Calu3 (cell line): ENCODE measurements at regions of chr16 and their contacts with region 1.

Region 1: GRCh38 chr16:4957720-4958509 is at the start of gene SEC14L5:
- DNase-seq: peak; percentile 99
- H3K4me3 Mint-ChIP-seq: peak within 1 kb of the TSS; percentile 66
- H3K27ac Mint-ChIP-seq: peak within 1 kb of the TSS; percentile 8
- H3K4me1 Mint-ChIP-seq: peaks cover 17% of the 10 kb centered on the region
- H3K27me3 Mint-ChIP-seq: peaks cover 39% of the 10 kb centered on the region
- CTCF ChIP-seq: no peak
- total RNA-seq, gene SEC14L5: 0.52 and 0.54 TPM in 2 replicates

Region 2: GRCh38 chr16:4734063-4734729 is 223.7 kb before region 1 on chr16 and contains the starts of genes ANKS3 and DNAAF8:
- CTCF ChIA-PET with region 1: interaction called, 4 read pairs
- intact Hi-C with region 1: loop called (anchors 10 kb)
- DNase-seq: peak; percentile 98
- H3K4me3 Mint-ChIP-seq: peak within 1 kb of the TSS; percentile 99
- H3K27ac Mint-ChIP-seq: peak within 1 kb of the TSS; percentile 97
- H3K4me1 Mint-ChIP-seq: peaks cover 17% of the 10 kb centered on the region
- H3K27me3 Mint-ChIP-seq: peaks cover 14% of the 10 kb centered on the region
- CTCF ChIP-seq: no peak
- total RNA-seq, gene ANKS3: 44.7 and 46.9 TPM in 2 replicates
- total RNA-seq, gene DNAAF8: 0.27 and 1.8 TPM in 2 replicates

Region 3: DNA sequence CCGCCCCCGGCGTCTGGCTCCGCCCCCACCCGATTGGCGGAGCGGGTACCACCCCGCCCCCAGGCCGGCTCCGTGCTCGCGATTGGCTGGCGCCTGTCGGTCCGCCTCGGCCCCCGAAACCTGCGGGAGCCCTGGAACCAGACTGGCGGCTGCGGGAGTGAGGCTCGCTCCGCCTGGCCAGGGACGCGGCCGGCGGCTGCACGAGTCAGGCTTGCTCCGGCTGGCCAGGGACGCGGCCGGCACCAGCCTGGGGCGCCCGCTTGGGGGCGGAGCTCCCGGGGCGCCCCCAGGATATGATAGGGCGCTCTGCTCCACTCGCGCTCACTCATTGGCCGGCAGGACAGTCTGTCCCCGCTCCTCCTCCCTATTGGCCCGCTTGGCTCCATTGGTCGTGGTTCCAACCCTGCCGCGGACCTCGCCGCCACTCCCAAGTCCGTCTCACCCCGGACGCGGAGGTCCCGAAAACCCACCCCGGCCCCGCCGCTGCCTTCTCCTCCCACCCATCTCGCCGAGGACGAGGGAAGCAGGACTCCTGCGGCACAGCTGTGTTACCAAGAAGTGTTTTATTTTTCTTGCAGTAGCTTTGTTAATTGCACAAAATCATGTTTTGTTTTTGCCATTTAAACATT is 155.1 kb before region 1 on chr16:
- CTCF ChIA-PET with region 1: interaction called, 4 read pairs
- intact Hi-C with region 1: loop called (anchors 2 kb)
- DNase-seq: peak; percentile 97
- H3K4me3 Mint-ChIP-seq: peak overlapping the region; percentile 82
- H3K27ac Mint-ChIP-seq: peak overlapping the region; percentile 90
- H3K4me1 Mint-ChIP-seq: peaks cover 9% of the 10 kb centered on the region
- H3K27me3 Mint-ChIP-seq: no peaks in the 10 kb centered on the region
- CTCF ChIP-seq: no peak

Region 4: GRCh38 chr16:4846891-4847773 is 110.8 kb before region 1 on chr16 and contains the starts of genes GLYR1 and UBN1:
- CTCF ChIA-PET with region 1: interaction called, 6 read pairs
- intact Hi-C with region 1: loop called (anchors 1 kb)
- DNase-seq: peak; percentile 100
- H3K4me3 Mint-ChIP-seq: peak within 1 kb of the TSS; percentile 100
- H3K27ac Mint-ChIP-seq: peak within 1 kb of the TSS; percentile 80
- H3K4me1 Mint-ChIP-seq: peaks cover 36% of the 10 kb centered on the region
- H3K27me3 Mint-ChIP-seq: no peaks in the 10 kb centered on the region
- CTCF ChIP-seq: no peak
- total RNA-seq, gene GLYR1: 158 and 159 TPM in 2 replicates
- total RNA-seq, gene UBN1: 50.5 and 55.4 TPM in 2 replicates

Region 5: DNA sequence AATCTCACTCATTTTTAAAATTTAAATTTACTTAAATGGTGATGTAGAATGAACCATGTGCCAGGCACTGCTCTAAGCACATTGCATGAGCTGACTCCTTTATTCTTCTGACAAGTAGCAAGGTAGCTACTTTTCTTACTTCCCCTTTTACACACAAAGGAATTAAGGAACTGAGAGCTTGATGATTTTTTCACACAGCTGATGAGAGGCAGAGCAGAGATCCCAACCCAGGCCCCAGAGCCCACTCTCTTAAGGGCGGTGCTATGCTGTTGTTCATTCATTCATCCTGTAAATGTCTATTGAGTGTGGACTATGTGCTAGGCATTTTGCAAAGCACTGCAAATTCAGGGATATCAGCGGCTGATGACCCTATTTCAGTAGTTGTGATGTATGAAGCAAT is 18.2 kb after region 1 on chr16:
- CTCF ChIA-PET with region 1: interaction called, 7 read pairs
- intact Hi-C with region 1: loop called (anchors 2 kb)
- DNase-seq: no peak
- H3K4me3 Mint-ChIP-seq: no peak overlapping the region
- H3K27ac Mint-ChIP-seq: no peak overlapping the region
- H3K4me1 Mint-ChIP-seq: no peaks in the 10 kb centered on the region
- H3K27me3 Mint-ChIP-seq: peaks cover 48% of the 10 kb centered on the region
- CTCF ChIP-seq: no peak

Region 6: GRCh38 chr16:5025171-5025632 is 67.3 kb after region 1 on chr16:
- CTCF ChIA-PET with region 1: no interaction called
- intact Hi-C with region 1: loop called (anchors 2 kb)
- DNase-seq: peak; percentile 28
- H3K4me3 Mint-ChIP-seq: no peak overlapping the region
- H3K27ac Mint-ChIP-seq: no peak overlapping the region
- H3K4me1 Mint-ChIP-seq: no peaks in the 10 kb centered on the region
- H3K27me3 Mint-ChIP-seq: peaks cover 33% of the 10 kb centered on the region
- CTCF ChIP-seq: peak; percentile 11

Region 7: GRCh38 chr16:5033256-5034169 is 75.6 kb after region 1 on chr16 and contains the start of gene NAGPA:
- CTCF ChIA-PET with region 1: no interaction called
- intact Hi-C with region 1: loop called (anchors 2 kb)
- DNase-seq: peak; percentile 92
- H3K4me3 Mint-ChIP-seq: peak within 1 kb of the TSS; percentile 76
- H3K27ac Mint-ChIP-seq: peak within 1 kb of the TSS; percentile 56
- H3K4me1 Mint-ChIP-seq: peaks cover 25% of the 10 kb centered on the region
- H3K27me3 Mint-ChIP-seq: peaks cover 38% of the 10 kb centered on the region
- CTCF ChIP-seq: no peak
- total RNA-seq, gene NAGPA: 15.8 and 16.1 TPM in 2 replicates